CD4-positive, alpha-beta T cell (primary cell): ENCODE measurements at regions of chr15 and their contacts with region 1.

Region 1: DNA sequence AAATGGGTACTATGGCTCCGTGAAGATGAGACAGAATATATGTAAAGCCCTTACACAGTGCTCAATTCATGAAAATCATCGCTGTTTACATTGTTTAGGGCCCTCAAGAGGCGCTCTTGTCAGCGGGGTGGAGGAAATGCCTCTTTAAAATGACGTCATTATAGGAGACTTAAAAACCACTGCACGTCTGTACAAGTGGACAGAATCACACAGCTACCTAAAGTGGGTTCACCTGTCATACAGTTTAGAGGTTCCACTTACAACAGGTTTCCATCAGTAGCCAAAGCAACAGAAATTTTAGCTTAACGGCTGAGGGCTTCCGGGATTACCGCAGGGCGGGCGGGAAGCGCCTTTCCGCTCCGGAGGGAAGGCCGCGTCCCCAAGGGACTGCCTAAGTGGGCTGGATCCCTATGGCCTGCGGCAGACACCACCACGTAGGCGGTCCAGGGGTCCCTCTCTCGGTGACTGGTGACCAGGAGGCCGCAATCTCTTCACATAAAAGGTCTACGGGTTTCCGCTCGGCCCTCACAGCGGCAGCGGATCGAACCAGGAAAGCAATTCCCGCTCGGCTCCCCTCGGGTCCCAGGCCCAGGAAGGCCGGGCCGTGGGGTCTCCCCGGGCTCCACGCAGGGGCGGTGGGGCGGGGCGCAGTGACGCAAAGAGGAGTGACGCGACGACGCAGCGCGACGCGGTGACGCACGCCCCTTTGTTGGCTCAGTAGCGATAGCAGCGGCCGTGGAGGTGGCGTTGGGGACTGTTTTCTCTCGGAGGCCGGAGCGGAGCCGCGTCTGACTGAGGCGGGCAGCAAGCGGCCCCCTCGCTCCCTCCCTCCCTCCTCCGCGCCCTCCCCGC is at the start of gene ARIH1:
- DNase-seq: peak; percentile 91 to 99 (median 96)
- ATAC-seq: peak; percentile 68
- H3K4me3 ChIP-seq: peak within 1 kb of the TSS; percentile 87
- H3K4me3 Mint-ChIP-seq: peak within 1 kb of the TSS; percentile 89
- H3K27ac ChIP-seq: peak within 1 kb of the TSS; percentile 100
- H3K27ac Mint-ChIP-seq: peak within 1 kb of the TSS; percentile 99
- H3K4me1 ChIP-seq: peaks cover 36% of the 10 kb centered on the region
- H3K4me1 Mint-ChIP-seq: peaks cover 62% of the 10 kb centered on the region
- H3K27me3 ChIP-seq: no peaks in the 10 kb centered on the region
- H3K27me3 Mint-ChIP-seq: no peaks in the 10 kb centered on the region
- CTCF ChIP-seq: peak; percentile 23
- total RNA-seq, gene ARIH1: 281 to 283 TPM

Region 2: GRCh38 chr15:72231066-72231846 is 242.6 kb before region 1 on chr15 and contains the start of gene PKM:
- CTCF ChIA-PET with region 1: interaction called, 3 read pairs
- POLR2A ChIA-PET with region 1: interaction called, 18 read pairs
- intact Hi-C with region 1: loop called in 1 of 2 experiments (anchors 5 kb)
- DNase-seq: peak; percentile 80 to 98 (median 89)
- ATAC-seq: peak; percentile 32
- H3K4me3 ChIP-seq: peak within 1 kb of the TSS; percentile 96
- H3K4me3 Mint-ChIP-seq: peak within 1 kb of the TSS; percentile 98
- H3K27ac ChIP-seq: peak within 1 kb of the TSS; percentile 78 to 92
- H3K27ac Mint-ChIP-seq: peak within 1 kb of the TSS; percentile 93
- H3K4me1 ChIP-seq: peaks cover 52% of the 10 kb centered on the region
- H3K4me1 Mint-ChIP-seq: peaks cover 58% of the 10 kb centered on the region
- H3K27me3 ChIP-seq: no peaks in the 10 kb centered on the region
- H3K27me3 Mint-ChIP-seq: no peaks in the 10 kb centered on the region
- CTCF ChIP-seq: no peak
- total RNA-seq, gene PKM: 202 to 203 TPM

Region 3: GRCh38 chr15:72312605-72313447 is 161.0 kb before region 1 on chr15:
- CTCF ChIA-PET with region 1: no interaction called
- POLR2A ChIA-PET with region 1: interaction called, 3 read pairs
- intact Hi-C with region 1: loop called in 1 of 2 experiments (anchors 5 kb)
- DNase-seq: peak; percentile 26 to 78 (median 46)
- ATAC-seq: peak; percentile 95
- H3K4me3 ChIP-seq: no peak overlapping the region
- H3K4me3 Mint-ChIP-seq: no peak overlapping the region
- H3K27ac ChIP-seq: no peak overlapping the region
- H3K27ac Mint-ChIP-seq: no peak overlapping the region
- H3K4me1 ChIP-seq: no peaks in the 10 kb centered on the region
- H3K4me1 Mint-ChIP-seq: peaks cover 4% of the 10 kb centered on the region
- H3K27me3 ChIP-seq: no peaks in the 10 kb centered on the region
- H3K27me3 Mint-ChIP-seq: no peaks in the 10 kb centered on the region
- CTCF ChIP-seq: peak; percentile 71

Region 4: DNA sequence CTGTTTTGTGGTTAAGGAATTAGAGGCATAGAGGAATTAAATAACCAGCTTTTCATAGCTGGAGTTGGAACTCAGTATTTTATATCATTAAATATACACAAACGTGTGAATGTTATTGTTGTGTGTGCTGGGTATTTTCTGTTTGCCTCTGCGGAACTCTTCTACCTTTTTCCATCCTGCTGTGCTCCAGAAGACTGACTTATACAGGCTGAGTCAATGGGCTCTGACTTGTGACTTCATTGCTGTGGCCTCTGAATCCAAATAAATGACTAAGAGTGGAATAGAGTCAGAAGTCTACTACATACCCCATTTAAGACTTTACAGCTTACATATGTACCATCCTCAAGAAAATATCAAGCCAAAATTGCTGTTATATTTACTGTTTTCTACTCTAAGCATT is 17.9 kb after region 1 on chr15:
- CTCF ChIA-PET with region 1: interaction called, 8 read pairs
- POLR2A ChIA-PET with region 1: interaction called, 6 read pairs
- intact Hi-C with region 1: loop called in 1 of 2 experiments (anchors 2 kb)
- DNase-seq: no peak
- ATAC-seq: no peak
- H3K4me3 ChIP-seq: no peak overlapping the region
- H3K4me3 Mint-ChIP-seq: peak overlapping the region; percentile 37
- H3K27ac ChIP-seq: no peak overlapping the region
- H3K27ac Mint-ChIP-seq: no peak overlapping the region
- H3K4me1 ChIP-seq: peaks cover 27% of the 10 kb centered on the region
- H3K4me1 Mint-ChIP-seq: peaks cover 95% of the 10 kb centered on the region
- H3K27me3 ChIP-seq: no peaks in the 10 kb centered on the region
- H3K27me3 Mint-ChIP-seq: no peaks in the 10 kb centered on the region
- CTCF ChIP-seq: no peak

Region 5: DNA sequence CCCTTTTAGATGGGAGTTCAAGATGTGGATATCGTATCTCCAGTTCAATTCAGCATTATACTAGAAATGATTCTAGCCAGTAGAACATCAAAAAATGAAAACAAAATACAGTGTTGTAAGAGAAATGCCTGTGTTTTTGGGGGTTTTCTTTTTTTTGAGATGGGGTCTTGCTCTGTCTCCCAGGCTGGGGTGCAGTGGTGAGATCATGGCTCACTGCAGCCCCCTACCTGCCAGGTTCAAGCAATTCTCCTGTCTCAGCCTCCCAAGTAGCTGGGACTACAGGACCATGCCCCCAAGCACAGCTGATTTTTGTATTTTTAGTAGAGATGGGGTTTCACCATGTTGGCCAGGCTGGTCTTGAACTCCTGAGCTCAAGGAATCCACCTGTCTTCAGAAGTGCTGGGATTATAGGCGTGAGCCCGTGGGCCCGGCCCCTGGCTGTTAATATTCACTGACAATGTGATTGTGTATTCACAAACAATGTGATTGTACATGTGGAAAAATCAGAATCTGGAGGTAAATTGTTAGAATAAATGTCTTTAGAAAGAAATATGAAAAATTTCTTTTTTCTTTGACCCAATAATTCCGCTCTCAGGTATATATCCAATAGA is 59.3 kb after region 1 on chr15:
- CTCF ChIA-PET with region 1: interaction called, 7 read pairs
- POLR2A ChIA-PET with region 1: interaction called, 7 read pairs
- intact Hi-C with region 1: loop called in 1 of 2 experiments (anchors 5 kb)
- DNase-seq: peak in 9 of 14 experiments; percentile 4 to 61 (median 21)
- ATAC-seq: no peak
- H3K4me3 ChIP-seq: no peak overlapping the region
- H3K4me3 Mint-ChIP-seq: no peak overlapping the region
- H3K27ac ChIP-seq: no peak overlapping the region
- H3K27ac Mint-ChIP-seq: no peak overlapping the region
- H3K4me1 ChIP-seq: peaks cover 19% of the 10 kb centered on the region
- H3K4me1 Mint-ChIP-seq: peaks cover 90% of the 10 kb centered on the region
- H3K27me3 ChIP-seq: no peaks in the 10 kb centered on the region
- H3K27me3 Mint-ChIP-seq: no peaks in the 10 kb centered on the region
- CTCF ChIP-seq: peak; percentile 77